ENCODE measurements at regions of chr1 and their contacts with region 1.

Region 1: GRCh38 chr1:33460947-33461629 is 11.4 kb upstream of the ZSCAN20 start:
- DNase-seq: no peak
- H3K4me3 ChIP-seq: no peak overlapping the region
- H3K27ac ChIP-seq: peak overlapping the region in 1 of 2 donors; percentile 27
- H3K4me1 ChIP-seq: peaks cover 13% of the 10 kb centered on the region
- H3K27me3 ChIP-seq: no peaks in the 10 kb centered on the region
- CTCF ChIP-seq: no peak
- EP300 ChIP-seq: no peak
- POLR2A ChIP-seq: no peak

Region 2: GRCh38 chr1:33094971-33095604 is 366.0 kb before region 1 on chr1:
- intact Hi-C with region 1: loop called in 1 of 4 experiments (anchors 10 kb)
- DNase-seq: peak in 4 of 5 donors; percentile 45 to 76 (median 61)
- H3K4me3 ChIP-seq: no peak overlapping the region
- H3K27ac ChIP-seq: no peak overlapping the region
- H3K4me1 ChIP-seq: peaks cover 2% of the 10 kb centered on the region
- H3K27me3 ChIP-seq: no peaks in the 10 kb centered on the region
- CTCF ChIP-seq: peak; percentile 72 to 88 (median 74)
- EP300 ChIP-seq: no peak
- POLR2A ChIP-seq: no peak

Region 3: GRCh38 chr1:33295450-33296081 is 165.5 kb before region 1 on chr1:
- intact Hi-C with region 1: loop called (anchors 5 to 10 kb)
- DNase-seq: peak; percentile 78 to 93 (median 90)
- H3K4me3 ChIP-seq: no peak overlapping the region
- H3K27ac ChIP-seq: no peak overlapping the region
- H3K4me1 ChIP-seq: peaks cover 3% of the 10 kb centered on the region
- H3K27me3 ChIP-seq: no peaks in the 10 kb centered on the region
- CTCF ChIP-seq: peak; percentile 96 to 97 (median 96)
- EP300 ChIP-seq: no peak
- POLR2A ChIP-seq: peak; percentile 28

Region 4: DNA sequence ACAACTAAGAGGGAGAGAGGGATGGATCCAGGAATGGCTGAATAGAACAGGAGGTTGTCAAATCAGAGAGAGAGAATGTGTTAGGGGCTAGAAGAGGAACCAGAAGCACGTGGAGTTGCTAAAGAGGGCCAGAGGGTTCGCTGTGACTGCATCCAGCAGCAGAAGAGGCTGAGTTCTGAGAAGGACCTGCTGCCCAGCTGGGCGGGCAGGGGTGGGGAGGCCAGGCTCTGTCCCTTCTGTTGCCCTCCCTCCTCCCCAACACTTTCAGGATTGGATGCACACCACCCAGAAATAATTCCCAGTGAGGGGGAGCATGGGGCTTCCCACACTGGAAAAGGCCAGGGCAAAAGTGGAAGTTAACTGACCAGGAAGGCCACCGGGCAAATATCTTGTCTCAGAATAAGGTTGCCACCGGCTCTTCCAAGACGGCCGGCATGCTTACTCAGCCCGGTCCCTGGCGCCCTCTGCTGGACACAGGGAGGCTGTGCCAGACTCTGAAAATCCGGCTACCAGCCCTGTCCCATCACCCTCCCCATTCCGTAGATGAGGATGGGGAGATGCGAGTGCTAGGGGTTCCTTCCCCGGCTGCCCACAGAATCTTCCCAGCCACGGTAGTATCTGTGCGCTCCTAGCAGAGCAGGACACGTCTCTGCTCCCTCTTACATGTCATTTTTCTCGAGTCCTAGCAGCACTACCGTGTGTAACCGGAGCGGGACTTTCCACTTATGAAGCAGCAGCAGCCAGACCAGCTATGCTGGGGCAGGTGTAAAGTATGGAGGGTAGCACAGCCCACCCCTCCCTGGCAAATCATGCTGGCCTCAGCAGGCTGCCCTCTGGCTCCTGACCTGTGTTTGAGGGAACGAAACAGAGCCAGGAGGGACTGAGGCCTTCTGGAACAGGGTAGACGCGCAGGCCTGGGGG is 93.3 kb before region 1 on chr1:
- intact Hi-C with region 1: loop called in 3 of 4 experiments (anchors 5 to 10 kb)
- DNase-seq: peak; percentile 86 to 92 (median 91)
- H3K4me3 ChIP-seq: no peak overlapping the region
- H3K27ac ChIP-seq: no peak overlapping the region
- H3K4me1 ChIP-seq: peaks cover 17% of the 10 kb centered on the region
- H3K27me3 ChIP-seq: no peaks in the 10 kb centered on the region
- CTCF ChIP-seq: peak; percentile 91 to 95 (median 93)
- EP300 ChIP-seq: no peak
- POLR2A ChIP-seq: peak; percentile 33

Region 5: DNA sequence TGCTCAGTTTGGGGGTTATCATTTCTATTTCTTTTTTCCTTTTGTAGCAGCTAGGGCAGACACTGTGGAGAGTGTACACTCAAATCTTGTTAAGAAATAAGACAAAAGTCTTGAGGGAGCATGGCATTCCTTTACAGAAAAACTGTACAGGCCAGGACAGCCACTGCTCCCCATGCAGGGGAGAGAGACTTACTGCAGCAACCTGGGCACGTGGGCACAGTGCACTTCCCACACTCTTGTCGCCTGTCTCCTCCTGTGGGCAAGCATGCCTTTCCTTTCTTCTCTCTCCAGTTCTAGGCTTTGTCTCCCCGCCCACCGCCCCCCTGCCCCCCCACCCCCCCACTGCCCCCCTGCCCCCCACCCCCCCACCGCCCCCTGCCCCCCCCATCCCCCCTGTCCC is 82.1 kb before region 1 on chr1:
- intact Hi-C with region 1: loop called in 2 of 4 experiments (anchors 10 kb)
- DNase-seq: no peak
- H3K4me3 ChIP-seq: no peak overlapping the region
- H3K27ac ChIP-seq: no peak overlapping the region
- H3K4me1 ChIP-seq: peaks cover 2% of the 10 kb centered on the region
- H3K27me3 ChIP-seq: no peaks in the 10 kb centered on the region
- CTCF ChIP-seq: no peak
- EP300 ChIP-seq: no peak
- POLR2A ChIP-seq: no peak

Region 6: DNA sequence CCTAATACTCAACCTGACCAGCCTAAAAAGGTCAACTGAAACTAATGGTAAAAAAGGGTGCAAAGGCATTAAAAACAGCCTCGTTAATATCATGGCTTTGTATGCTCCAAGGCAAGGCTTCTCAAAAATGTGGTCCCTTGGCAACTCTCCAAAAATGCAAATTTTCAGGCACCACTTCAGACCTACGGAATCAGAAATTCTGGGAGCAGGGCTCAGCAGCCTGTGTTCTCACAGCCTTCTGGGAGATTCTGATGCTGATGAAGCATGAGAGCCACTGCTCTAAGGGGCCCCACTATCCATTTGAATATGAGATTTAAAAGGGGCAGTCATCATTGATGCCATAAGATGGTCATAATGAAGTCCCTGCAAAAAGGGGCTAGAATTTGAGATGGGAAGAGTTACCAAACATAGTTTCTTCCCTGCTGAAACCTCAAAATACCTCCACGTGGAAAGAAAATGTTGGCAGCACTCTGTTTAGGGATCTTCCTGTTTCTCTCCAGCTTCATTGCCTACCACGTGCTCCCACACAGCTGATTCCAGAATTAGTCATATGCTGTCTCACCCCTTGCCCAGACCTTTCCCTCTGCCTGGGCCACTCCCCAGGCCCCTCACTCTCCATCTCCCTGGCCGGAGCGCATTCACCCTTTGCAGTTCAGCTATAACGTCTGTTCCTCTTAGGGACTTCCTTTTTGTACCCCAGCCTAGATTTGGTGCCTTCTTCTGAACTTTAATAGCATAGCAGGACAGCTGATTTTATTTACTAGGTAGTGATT is 76.9 kb before region 1 on chr1:
- intact Hi-C with region 1: loop called in 2 of 4 experiments (anchors 10 kb)
- DNase-seq: peak in 2 of 5 donors; percentile 44 to 45
- H3K4me3 ChIP-seq: no peak overlapping the region
- H3K27ac ChIP-seq: no peak overlapping the region
- H3K4me1 ChIP-seq: peaks cover 10% of the 10 kb centered on the region
- H3K27me3 ChIP-seq: no peaks in the 10 kb centered on the region
- CTCF ChIP-seq: no peak
- EP300 ChIP-seq: no peak
- POLR2A ChIP-seq: no peak

Region 7: DNA sequence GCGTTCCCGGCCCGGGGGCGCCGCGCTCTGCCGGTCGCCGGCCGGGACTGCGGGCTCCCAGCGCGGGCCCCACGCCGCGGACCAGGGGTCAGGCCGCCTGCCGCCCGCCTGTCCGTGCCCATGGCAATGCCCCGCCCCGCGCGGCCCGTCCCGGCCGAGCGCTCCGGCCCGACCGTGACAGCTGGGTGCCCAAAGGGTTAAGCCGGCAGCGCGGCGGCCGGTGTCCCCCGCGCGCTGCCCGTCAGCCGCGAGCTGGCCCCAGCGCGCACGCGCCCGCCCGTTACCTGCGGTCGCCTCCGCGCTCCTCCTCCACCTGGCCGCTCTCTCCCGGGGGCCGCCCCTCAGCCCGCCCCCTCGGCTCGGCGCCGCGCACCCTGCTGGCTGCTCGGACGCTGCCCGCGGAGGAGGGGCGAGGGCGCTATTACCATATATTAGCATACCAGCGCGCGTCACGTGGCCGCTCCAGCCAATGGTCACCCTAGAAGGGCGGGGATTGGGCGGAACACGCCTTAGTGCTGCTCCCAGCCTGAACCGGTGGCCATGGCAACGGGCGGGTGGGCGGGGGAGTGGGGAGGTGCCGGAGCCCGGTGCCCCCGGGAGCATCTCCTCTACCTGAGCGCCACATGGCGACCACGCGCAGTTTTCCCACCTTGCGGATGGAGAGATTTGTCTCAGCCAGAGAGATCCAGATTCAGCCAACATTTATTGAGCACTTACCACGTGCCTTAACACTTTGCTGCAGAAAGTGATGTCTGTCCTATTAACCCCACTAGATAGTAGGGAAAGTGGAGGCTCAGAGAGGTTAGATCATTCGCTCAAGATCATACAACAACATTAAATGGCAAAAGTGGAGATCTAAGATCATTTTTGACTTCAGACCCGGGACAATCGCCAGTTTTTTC is 30.1 kb before region 1 on chr1 and contains the start of gene PHC2:
- intact Hi-C with region 1: no loop called
- DNase-seq: peak; percentile 97 to 98 (median 98)
- H3K4me3 ChIP-seq: peak within 1 kb of the TSS; percentile 55
- H3K27ac ChIP-seq: peak within 1 kb of the TSS; percentile 54 to 55
- H3K4me1 ChIP-seq: peaks cover 8% of the 10 kb centered on the region
- H3K27me3 ChIP-seq: no peaks in the 10 kb centered on the region
- CTCF ChIP-seq: peak; percentile 18 to 64 (median 34)
- EP300 ChIP-seq: no peak
- POLR2A ChIP-seq: peak; percentile 54
- total RNA-seq, gene PHC2: 64.3 to 101 (median 92.8) TPM

Region 8: DNA sequence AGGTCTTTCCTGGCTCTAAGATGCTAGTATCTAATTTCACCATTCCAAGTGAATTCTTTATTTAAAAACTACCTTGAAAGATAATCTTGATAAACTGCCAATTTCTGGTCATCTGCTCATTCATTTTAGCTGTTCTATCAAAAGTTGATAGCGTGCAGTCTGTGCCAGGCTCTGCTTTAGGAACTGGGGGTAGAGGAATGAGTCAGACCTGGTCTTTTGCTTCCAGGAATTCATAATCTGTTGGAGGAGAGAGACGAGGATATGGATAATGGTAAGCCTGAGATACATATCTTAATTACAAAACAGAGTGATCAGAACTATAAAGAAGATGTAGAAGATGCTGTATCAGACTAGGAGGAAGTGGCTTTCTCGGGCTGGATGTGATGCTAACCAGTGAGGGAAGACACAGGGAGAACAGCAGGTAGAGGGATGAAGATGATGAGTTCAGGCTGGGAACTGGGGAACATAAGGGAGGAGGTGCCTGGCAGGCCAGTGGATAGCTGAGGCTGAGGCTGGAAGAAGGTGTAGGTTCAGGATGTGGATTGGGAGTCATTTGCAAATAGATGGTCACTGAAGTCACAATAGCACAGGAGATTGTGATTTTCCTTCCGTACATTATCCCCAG is 17.9 kb before region 1 on chr1:
- intact Hi-C with region 1: no loop called
- DNase-seq: no peak
- H3K4me3 ChIP-seq: no peak overlapping the region
- H3K27ac ChIP-seq: no peak overlapping the region
- H3K4me1 ChIP-seq: no peaks in the 10 kb centered on the region
- H3K27me3 ChIP-seq: no peaks in the 10 kb centered on the region
- CTCF ChIP-seq: no peak
- EP300 ChIP-seq: no peak
- POLR2A ChIP-seq: no peak